Activated naive CD4-positive, alpha-beta T cell treated with anti-CD3 and anti-CD28 coated beads, Interleukin-2, amount 10 ng/mL, durations not matched to agents 7 days and 5 days (primary cell): ENCODE measurements at regions of chr20 and their contacts with region 1.

Region 1: GRCh38 chr20:36613974-36614373 is 8.4 kb downstream of the RAB5IF start:
- DNase-seq: no peak
- H3K4me3 Mint-ChIP-seq: no peak overlapping the region
- H3K27ac Mint-ChIP-seq: no peak overlapping the region
- H3K4me1 Mint-ChIP-seq: peaks cover 4% of the 10 kb centered on the region
- H3K27me3 Mint-ChIP-seq: no peaks in the 10 kb centered on the region

Region 2: DNA sequence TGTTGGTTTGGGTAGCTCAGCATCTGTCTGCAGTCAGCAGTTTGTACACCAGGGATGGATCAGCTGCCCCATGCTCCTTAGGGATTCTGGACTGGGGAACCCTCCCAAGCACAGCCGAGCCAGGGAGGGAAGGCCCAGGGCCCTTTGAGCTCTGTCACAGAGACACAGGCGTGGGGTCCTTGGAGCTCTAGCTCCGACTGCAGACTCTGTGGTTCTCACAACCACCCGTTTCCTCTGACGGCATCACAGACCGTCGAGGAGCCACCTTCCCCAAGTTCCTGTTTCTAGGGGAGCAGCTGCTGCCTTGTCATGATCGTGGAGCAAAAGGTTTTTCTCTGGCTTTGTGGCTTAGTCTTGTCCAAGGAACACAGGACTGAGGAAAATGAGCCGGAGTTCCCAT is 32.0 kb after region 1 on chr20 and contains the start of gene SLA2:
- CTCF ChIA-PET with region 1: interaction called, 21 read pairs
- DNase-seq: peak; percentile 80
- H3K4me3 Mint-ChIP-seq: peak within 1 kb of the TSS; percentile 96
- H3K27ac Mint-ChIP-seq: peak within 1 kb of the TSS; percentile 97
- H3K4me1 Mint-ChIP-seq: peaks cover 54% of the 10 kb centered on the region
- H3K27me3 Mint-ChIP-seq: no peaks in the 10 kb centered on the region

Region 3: DNA sequence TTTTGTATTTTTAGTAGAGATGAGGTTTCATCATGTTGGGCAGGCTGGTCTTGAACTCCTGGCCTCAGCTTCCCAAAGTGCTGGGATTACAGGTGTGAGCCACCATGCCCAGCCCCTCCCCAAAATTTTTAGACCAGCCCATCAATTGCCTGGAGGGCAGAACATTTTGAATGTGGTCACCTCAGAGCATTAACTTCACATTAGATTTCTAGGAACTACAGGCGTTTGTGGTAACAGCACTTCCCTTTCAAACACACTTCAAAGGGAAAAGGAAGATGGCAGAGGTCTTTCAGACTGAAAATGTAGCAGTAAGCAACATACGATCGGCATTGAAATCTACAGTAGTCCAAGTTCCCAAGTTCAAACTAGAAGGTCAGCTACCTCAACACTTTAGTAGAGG is 44.3 kb after region 1 on chr20:
- CTCF ChIA-PET with region 1: no interaction called
- DNase-seq: peak; percentile 53
- H3K4me3 Mint-ChIP-seq: peak overlapping the region; percentile 62
- H3K27ac Mint-ChIP-seq: peak overlapping the region; percentile 92
- H3K4me1 Mint-ChIP-seq: peaks cover 31% of the 10 kb centered on the region
- H3K27me3 Mint-ChIP-seq: no peaks in the 10 kb centered on the region

Region 4: DNA sequence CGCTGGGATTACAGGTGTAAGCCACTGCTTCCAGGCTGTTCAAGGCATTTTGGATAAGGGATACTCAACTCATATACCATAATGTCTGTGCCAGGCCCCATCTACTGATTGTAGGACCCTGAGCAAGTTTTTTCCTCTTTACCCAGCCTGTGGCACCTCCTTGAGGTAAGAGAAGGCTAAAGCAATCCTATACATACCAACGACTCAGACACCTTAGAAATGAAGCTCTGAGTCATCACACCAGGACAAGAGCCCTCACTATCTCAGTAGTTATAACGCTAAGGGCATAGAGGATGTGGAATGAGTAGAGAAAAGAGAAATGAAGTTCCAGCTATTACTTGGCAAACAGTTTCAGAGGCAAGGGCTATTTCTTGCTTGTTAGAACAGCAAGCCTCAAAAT is 115.0 kb after region 1 on chr20:
- CTCF ChIA-PET with region 1: interaction called, 13 read pairs
- DNase-seq: no peak
- H3K4me3 Mint-ChIP-seq: no peak overlapping the region
- H3K27ac Mint-ChIP-seq: no peak overlapping the region
- H3K4me1 Mint-ChIP-seq: peaks cover 27% of the 10 kb centered on the region
- H3K27me3 Mint-ChIP-seq: no peaks in the 10 kb centered on the region